ENCODE measurements at regions of chr5 and their contacts with region 1.

Region 1: DNA sequence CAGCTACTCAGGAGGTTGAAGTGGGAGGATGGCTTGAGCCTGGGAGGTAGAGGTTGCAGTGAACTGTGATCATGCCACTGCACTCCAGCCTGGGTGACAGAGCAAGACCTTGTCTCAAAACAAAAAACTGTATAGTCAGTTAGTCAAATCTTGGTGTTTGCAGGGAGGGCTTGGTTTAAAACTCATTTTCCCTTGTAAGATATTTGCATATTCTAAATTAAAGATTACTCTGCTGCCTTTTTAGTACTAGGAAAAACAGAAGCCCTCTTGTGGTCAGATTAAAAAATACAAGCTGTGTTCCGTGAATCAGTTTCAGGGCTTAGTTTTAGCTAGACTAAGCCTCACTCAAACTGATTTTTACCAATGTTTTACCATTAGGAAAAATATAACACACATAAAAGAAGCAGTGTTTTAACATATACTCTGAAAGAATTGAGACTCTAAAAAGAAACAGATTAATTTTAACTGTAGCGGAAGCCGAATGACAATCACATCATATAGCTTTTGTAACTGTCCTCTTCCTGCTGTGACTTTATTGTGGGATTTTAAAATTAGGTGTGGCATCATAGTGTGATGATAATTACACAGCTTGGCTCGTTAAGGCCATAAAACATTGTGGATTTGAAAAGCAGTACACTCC is 84.9 kb upstream of the BASP1 start:
- H3K4me3 Mint-ChIP-seq: no peak overlapping the region
- H3K27ac Mint-ChIP-seq: no peak overlapping the region
- H3K4me1 Mint-ChIP-seq: peaks cover 9% of the 10 kb centered on the region
- H3K27me3 Mint-ChIP-seq: peaks cover 32% of the 10 kb centered on the region

Region 2: DNA sequence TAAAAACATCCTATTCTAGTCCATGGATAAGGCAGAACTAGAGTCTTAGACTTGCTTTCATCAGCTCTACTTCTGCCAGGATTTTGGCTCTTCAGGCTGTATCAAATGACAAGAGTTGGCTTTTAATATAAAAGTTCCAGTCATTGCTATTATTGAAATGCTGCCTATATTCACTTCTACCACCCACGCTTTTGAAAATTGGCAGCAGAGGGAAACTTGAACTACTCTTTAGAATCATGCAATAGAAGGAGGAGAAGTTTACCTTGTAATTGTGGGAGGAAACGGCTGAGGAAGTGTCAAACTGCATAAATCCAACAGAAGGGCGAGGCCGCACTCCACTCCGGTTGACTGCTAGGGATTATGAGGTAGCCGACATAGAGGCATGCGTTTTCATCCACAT is 37.7 kb before region 1 on chr5:
- intact Hi-C with region 1: loop called (anchors 5 kb)
- H3K4me3 Mint-ChIP-seq: no peak overlapping the region
- H3K27ac Mint-ChIP-seq: no peak overlapping the region
- H3K4me1 Mint-ChIP-seq: peaks cover 7% of the 10 kb centered on the region
- H3K27me3 Mint-ChIP-seq: peaks cover 34% of the 10 kb centered on the region

Region 3: DNA sequence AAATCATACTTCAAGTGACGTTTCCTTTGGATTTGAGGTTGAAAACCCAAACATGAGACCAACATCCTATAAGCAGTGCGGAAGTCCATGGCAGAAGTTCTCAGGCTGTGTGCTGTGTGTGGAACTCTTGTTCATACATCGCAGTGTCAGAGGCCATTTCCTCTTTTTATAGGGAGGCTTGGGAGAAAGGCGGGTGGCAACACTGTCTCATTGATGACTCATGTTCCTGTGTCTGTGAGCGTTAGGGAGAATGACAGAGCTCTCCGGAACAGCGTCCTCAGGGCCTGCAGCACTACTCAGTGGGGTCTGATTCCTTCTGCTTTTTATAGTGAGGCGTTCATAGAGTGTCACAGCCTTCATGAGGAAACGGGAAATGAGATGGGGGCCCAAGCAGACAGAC is 13.9 kb before region 1 on chr5:
- intact Hi-C with region 1: loop called (anchors 2 kb)
- H3K4me3 Mint-ChIP-seq: peak overlapping the region; percentile 32
- H3K27ac Mint-ChIP-seq: peak overlapping the region; percentile 92
- H3K4me1 Mint-ChIP-seq: peaks cover 46% of the 10 kb centered on the region
- H3K27me3 Mint-ChIP-seq: peaks cover 6% of the 10 kb centered on the region

Measured in dendritic cell treated with granulocyte-macrophage colony-stimulating factor and Interleukin-4, amounts not matched to agents 40 ng/mL and 50 ng/mL, for 4 days (primary cell).